GM12878 (cell line): ENCODE measurements at regions of chr4 and their contacts with region 1.

Region 1: DNA sequence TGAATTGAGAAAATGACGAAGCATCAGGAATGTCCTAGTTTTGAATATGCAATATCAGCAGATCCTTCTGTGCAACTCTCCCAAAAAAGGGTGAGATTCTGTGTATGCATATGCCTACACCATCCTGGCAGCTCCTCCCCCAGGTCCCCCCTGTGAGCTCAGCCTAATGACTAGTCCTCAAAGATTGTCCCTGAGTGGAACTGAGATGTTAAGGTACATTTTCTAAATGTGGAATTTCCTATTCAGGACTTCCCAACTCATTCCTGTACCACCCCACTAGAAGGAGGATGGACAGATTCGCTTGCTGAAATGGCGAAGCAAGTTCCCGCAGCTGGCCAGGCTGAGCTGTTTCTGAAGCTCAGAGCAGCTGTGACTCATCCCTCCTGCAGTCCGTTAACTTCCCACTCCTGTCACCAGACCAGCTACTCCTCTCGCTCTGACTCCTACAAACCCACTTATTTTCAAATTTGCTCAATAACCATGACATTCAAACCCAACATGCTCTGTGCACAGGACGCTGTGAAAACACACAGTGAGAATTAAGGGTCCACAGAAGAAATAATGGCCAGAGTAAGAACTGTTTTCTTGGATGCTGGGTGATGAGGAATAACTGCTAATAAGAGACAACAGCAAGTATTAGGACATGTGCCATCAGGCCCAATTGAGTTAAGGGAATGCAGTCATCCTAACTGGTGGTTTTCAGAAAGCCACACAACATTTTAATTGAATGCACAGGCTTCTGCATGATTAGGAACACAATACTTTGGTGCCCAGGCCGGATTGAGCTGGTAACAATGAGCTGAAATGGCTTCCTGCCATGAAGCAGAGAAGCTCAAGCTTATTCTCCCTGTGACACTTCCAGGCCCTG is 40.0 kb upstream of the IRF2 start:
- DNase-seq: peak; percentile 94
- ATAC-seq: peak; percentile 96
- H3K4me3 ChIP-seq: peak overlapping the region; percentile 42
- H3K27ac ChIP-seq: peak overlapping the region; percentile 70
- H3K4me1 ChIP-seq: peaks cover 32% of the 10 kb centered on the region
- H3K27me3 ChIP-seq: no peaks in the 10 kb centered on the region
- CTCF ChIP-seq: no peak
- EP300 ChIP-seq: peak; percentile 99 to 100
- POLR2A ChIP-seq: 0 out of 2 replicates have a peak, but pooled peaks have one; percentile 30
- RAD21 ChIP-seq: no peak

Region 2: DNA sequence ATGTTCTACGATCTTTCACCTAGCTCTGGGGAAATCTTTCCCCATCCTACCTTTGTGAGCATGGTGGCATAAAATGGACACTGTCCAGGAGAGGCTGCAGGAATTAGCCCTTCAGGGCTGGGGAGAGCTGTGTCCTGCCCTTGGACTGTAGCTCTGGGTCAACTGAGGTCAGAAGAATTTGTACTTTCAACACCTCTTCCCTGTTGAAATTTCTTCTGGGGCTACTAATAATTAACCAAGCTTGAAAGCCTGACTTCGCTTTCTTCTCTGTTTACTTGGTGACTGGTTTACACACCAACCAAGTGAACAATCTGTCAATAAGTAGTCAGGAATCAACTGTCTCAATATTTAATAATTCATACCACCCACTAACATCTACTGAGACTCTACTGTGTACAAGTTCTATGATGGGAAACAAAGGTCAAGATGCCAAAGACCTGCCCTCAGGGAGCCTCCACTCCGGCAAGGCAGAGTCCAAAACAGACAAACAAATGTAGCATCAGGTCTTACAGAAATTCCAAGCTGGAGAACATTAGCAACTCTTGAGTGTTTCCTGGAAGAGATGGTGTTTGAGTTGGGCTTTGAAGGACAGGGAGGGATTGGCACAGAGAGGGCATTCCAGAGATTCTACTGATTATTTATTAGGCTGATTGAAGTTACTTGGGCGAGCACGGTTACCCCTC is 409.8 kb before region 1 on chr4:
- CTCF ChIA-PET with region 1: no interaction called
- POLR2A ChIA-PET with region 1: no interaction called
- RAD21 ChIA-PET with region 1: no interaction called
- SMC1A ChIA-PET with region 1: no interaction called
- in situ Hi-C with region 1: no loop called
- intact Hi-C with region 1: no loop called
- DNase-seq: no peak
- ATAC-seq: no peak
- H3K4me3 ChIP-seq: no peak overlapping the region
- H3K27ac ChIP-seq: no peak overlapping the region
- H3K4me1 ChIP-seq: no peaks in the 10 kb centered on the region; the same call in 1 of the 2 replicates
- H3K27me3 ChIP-seq: no peaks in the 10 kb centered on the region; a peak in 1 of 4 replicates
- CTCF ChIP-seq: no peak
- EP300 ChIP-seq: no peak
- POLR2A ChIP-seq: no peak
- RAD21 ChIP-seq: no peak

Region 3: DNA sequence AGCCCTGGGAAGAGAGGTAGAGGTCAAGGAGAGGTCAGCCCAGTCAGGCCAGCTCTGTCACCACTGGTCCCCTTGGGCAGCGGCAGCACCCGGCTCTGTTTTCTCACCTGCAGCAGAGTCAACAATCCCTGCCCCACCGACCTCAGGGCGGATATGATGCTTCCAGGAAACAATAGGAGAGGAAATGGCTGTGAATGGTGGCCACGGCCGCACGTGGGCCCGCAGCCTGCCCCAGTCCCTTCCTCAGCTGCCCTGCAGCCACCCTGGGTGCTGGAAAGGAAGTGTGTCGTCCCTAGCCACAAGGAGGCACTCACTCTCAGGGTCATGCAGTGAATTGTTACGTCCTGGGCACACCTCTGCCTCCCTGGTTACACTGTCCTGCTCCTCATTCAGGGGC is 204.2 kb before region 1 on chr4:
- CTCF ChIA-PET with region 1: interaction called, 3 read pairs
- POLR2A ChIA-PET with region 1: no interaction called
- RAD21 ChIA-PET with region 1: interaction called, 4 read pairs
- SMC1A ChIA-PET with region 1: interaction called, 12 read pairs
- in situ Hi-C with region 1: no loop called
- intact Hi-C with region 1: no loop called
- DNase-seq: no peak
- ATAC-seq: peak; percentile 61
- H3K4me3 ChIP-seq: peak overlapping the region; percentile 75; the same call in 1 of the 2 replicates
- H3K27ac ChIP-seq: peak overlapping the region; percentile 94
- H3K4me1 ChIP-seq: peaks cover 47% of the 10 kb centered on the region
- H3K27me3 ChIP-seq: no peaks in the 10 kb centered on the region
- CTCF ChIP-seq: peak; percentile 49 to 59 (median 49)
- EP300 ChIP-seq: no peak
- POLR2A ChIP-seq: peak; percentile 33; the same call in 1 of the 2 replicates
- RAD21 ChIP-seq: peak; percentile 65

Region 4: DNA sequence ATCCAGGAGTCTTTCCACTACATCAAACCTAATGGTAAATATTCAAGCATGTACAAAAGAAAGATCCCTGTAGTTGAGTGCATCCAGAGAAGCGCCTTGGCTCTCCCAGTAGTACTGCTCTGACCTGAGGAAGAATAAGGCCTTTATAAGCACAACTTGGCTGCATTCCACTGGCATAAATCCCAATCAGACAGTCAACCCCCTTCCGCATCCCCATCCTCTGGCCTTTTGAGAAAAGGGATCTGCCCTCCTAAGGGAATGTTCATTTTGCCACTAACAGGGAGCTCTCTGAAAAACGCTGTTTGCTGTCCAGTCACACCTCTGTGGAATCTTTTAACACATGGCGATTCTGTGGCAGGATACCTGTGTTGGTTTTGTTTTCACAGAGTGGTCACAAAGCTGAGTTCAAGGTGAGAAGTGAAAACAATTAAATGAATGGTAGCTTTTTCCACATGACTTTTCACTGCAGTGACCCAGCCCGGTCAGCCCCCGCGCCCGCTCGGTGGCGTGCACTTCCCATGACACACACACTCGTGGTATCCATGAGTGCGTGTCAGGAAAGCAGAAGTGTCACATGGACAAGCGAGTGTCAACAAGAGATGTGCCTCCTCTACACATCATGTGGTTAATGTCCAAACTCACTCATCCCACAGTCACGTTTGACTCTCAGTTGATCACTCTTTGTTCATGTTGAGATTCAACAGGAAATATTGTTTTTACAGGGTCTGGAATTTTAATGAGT is 184.5 kb before region 1 on chr4:
- CTCF ChIA-PET with region 1: no interaction called
- POLR2A ChIA-PET with region 1: interaction called, 5 read pairs
- RAD21 ChIA-PET with region 1: interaction called, 11 read pairs
- SMC1A ChIA-PET with region 1: interaction called, 9 read pairs
- in situ Hi-C with region 1: no loop called
- intact Hi-C with region 1: no loop called
- DNase-seq: peak; percentile 90
- ATAC-seq: peak; percentile 81
- H3K4me3 ChIP-seq: no peak overlapping the region
- H3K27ac ChIP-seq: peak overlapping the region; percentile 90
- H3K4me1 ChIP-seq: peaks cover 44% of the 10 kb centered on the region
- H3K27me3 ChIP-seq: no peaks in the 10 kb centered on the region
- CTCF ChIP-seq: no peak; a peak in 2 of 6 replicates
- EP300 ChIP-seq: peak; percentile 98 to 100
- POLR2A ChIP-seq: peak; percentile 53; the same call in 1 of the 2 replicates
- RAD21 ChIP-seq: peak; percentile 28; the same call in 1 of the 2 replicates

Region 5: DNA sequence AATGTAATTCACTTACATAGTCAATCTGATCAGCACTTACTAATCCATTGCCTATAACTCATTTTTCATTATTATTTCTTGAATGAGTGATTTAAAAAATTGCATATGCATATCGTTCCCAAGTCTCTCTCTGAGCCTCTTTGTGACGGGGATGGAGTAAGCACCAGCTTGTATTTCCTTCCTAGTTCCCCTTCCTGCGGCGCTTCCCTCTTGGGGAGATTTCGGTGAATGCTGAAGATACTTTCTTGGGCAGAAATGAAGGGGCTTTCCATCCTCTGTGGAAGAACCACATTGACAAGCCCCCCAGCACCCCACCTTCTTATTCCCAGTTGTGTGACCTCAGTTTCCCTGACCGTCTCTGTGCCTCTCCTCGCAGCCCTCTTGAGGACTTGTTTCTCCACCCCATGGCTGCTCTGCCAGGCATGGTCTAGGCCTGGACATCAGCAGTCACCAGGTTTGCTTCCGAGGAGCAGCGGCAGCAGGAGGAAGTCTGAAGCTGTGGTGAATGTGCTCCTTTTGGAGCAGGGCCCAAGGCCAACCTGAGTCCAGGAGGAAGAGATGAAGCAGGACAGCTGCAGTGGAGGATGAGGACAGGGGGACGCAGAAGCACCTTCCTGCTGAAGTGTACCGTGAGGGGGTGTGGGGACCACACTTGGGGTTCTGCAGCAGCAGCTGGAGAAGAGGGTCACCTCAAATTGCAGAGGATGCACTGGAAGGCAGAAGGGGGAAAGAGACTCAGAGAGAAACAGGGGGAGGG is 164.9 kb before region 1 on chr4:
- CTCF ChIA-PET with region 1: no interaction called
- POLR2A ChIA-PET with region 1: interaction called, 7 read pairs
- RAD21 ChIA-PET with region 1: interaction called, 38 read pairs
- SMC1A ChIA-PET with region 1: interaction called, 13 read pairs
- in situ Hi-C with region 1: no loop called
- intact Hi-C with region 1: no loop called
- DNase-seq: no peak
- ATAC-seq: no peak
- H3K4me3 ChIP-seq: peak overlapping the region; percentile 89
- H3K27ac ChIP-seq: peak overlapping the region; percentile 99
- H3K4me1 ChIP-seq: peaks cover 50% of the 10 kb centered on the region
- H3K27me3 ChIP-seq: no peaks in the 10 kb centered on the region
- CTCF ChIP-seq: no peak
- EP300 ChIP-seq: no peak
- POLR2A ChIP-seq: no peak
- RAD21 ChIP-seq: no peak

Region 6: GRCh38 chr4:184355111-184355604 is 159.2 kb before region 1 on chr4:
- CTCF ChIA-PET with region 1: no interaction called
- POLR2A ChIA-PET with region 1: interaction called, 7 read pairs
- RAD21 ChIA-PET with region 1: interaction called, 38 read pairs
- SMC1A ChIA-PET with region 1: interaction called, 11 read pairs
- in situ Hi-C with region 1: no loop called
- intact Hi-C with region 1: no loop called
- DNase-seq: peak; percentile 84
- ATAC-seq: peak; percentile 15
- H3K4me3 ChIP-seq: no peak overlapping the region
- H3K27ac ChIP-seq: peak overlapping the region; percentile 99
- H3K4me1 ChIP-seq: peaks cover 16% of the 10 kb centered on the region
- H3K27me3 ChIP-seq: no peaks in the 10 kb centered on the region
- CTCF ChIP-seq: no peak
- EP300 ChIP-seq: peak; percentile 52 to 63; a peak in 2 of 4 replicates
- POLR2A ChIP-seq: no peak
- RAD21 ChIP-seq: peak; percentile 28

Region 7: DNA sequence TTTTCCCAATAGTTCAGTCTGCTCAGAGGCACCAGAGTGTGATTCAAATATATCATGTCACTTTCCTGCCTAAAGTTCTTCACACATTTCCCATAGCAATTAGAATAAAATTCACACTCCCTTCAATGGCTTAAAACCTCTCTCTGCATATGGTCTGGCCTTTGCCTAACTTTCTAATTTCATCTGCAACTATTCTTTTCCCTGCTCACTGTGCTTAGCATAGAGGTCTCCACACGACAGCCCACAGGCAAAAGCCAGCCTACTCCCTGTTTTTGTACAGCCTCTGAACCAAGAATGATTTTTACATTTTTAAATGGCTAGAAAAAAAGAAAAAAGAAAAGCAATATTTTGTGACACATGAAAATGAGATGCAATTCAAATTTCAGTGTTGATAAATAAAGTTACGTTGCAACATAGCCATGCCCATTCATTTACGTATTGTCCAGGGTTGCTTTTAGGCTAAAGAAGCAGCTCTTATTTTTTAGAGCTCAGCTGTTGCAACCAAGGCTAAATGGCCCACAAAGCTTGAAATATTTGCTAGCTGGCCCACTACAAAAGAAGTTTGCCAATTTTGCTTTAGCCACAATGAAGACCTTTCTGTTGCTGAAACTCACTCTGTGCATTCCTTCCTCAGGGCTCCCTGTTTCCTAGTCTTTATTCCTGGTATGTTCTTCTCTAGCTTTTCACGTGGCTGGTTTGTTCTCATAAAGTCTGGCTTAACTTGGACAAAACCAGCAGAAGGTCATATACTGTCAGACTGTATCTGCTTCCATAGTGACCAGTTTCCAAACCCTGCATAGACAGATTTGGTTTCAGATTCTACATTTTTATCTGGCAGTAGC is 13.4 kb before region 1 on chr4:
- CTCF ChIA-PET with region 1: interaction called, 10 read pairs
- POLR2A ChIA-PET with region 1: interaction called, 4 read pairs
- RAD21 ChIA-PET with region 1: interaction called, 14 read pairs
- SMC1A ChIA-PET with region 1: interaction called, 13 read pairs
- in situ Hi-C with region 1: no loop called
- intact Hi-C with region 1: no loop called
- DNase-seq: no peak
- ATAC-seq: no peak
- H3K4me3 ChIP-seq: no peak overlapping the region
- H3K27ac ChIP-seq: no peak overlapping the region
- H3K4me1 ChIP-seq: peaks cover 18% of the 10 kb centered on the region
- H3K27me3 ChIP-seq: no peaks in the 10 kb centered on the region
- CTCF ChIP-seq: no peak
- EP300 ChIP-seq: no peak
- POLR2A ChIP-seq: no peak
- RAD21 ChIP-seq: no peak

Region 8: GRCh38 chr4:184528051-184528450 is 13.7 kb after region 1 on chr4:
- CTCF ChIA-PET with region 1: interaction called, 10 read pairs
- POLR2A ChIA-PET with region 1: interaction called, 4 read pairs
- RAD21 ChIA-PET with region 1: interaction called, 88 read pairs
- SMC1A ChIA-PET with region 1: interaction called, 117 read pairs
- in situ Hi-C with region 1: no loop called
- intact Hi-C with region 1: no loop called
- DNase-seq: no peak
- ATAC-seq: no peak
- H3K4me3 ChIP-seq: no peak overlapping the region
- H3K27ac ChIP-seq: no peak overlapping the region
- H3K4me1 ChIP-seq: no peaks in the 10 kb centered on the region
- H3K27me3 ChIP-seq: no peaks in the 10 kb centered on the region
- CTCF ChIP-seq: no peak
- EP300 ChIP-seq: no peak
- POLR2A ChIP-seq: no peak
- RAD21 ChIP-seq: no peak